ENCODE measurements at regions of chr1 and their contacts with region 1.

Region 1: DNA sequence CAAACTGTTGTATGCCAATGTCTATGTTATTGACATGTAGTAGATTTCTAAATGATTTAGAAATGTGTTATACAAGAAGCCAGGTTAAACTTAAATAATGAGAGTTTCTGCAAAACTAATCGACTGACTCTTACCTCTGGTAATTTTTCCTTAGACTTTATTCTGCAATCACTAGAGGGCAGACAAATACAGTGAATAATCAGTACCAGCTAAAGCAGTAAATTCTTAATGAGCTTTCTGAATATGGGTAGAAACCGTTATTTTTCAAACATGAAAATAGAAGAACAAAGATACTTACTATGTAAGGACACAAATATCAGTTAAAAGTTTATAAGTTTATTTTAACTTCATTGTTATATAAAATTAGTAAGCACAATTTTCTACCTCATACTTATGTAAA is 97.9 kb upstream of the RGS1 start:
- DNase-seq: peak; percentile 31
- CTCF ChIP-seq: peak; percentile 61

Region 2: GRCh38 chr1:192445848-192446489 is 31.7 kb before region 1 on chr1:
- CTCF ChIA-PET with region 1: no interaction called
- POLR2A ChIA-PET with region 1: no interaction called
- DNase-seq: no peak
- CTCF ChIP-seq: peak; percentile 71

Region 3: GRCh38 chr1:192489748-192490147 is 12.1 kb after region 1 on chr1:
- CTCF ChIA-PET with region 1: interaction called, 11 read pairs
- POLR2A ChIA-PET with region 1: no interaction called
- DNase-seq: no peak
- CTCF ChIP-seq: no peak

Region 4: GRCh38 chr1:192588546-192588945 is 110.9 kb after region 1 on chr1:
- CTCF ChIA-PET with region 1: interaction called, 13 read pairs
- POLR2A ChIA-PET with region 1: no interaction called
- DNase-seq: no peak
- CTCF ChIP-seq: no peak

Region 5: DNA sequence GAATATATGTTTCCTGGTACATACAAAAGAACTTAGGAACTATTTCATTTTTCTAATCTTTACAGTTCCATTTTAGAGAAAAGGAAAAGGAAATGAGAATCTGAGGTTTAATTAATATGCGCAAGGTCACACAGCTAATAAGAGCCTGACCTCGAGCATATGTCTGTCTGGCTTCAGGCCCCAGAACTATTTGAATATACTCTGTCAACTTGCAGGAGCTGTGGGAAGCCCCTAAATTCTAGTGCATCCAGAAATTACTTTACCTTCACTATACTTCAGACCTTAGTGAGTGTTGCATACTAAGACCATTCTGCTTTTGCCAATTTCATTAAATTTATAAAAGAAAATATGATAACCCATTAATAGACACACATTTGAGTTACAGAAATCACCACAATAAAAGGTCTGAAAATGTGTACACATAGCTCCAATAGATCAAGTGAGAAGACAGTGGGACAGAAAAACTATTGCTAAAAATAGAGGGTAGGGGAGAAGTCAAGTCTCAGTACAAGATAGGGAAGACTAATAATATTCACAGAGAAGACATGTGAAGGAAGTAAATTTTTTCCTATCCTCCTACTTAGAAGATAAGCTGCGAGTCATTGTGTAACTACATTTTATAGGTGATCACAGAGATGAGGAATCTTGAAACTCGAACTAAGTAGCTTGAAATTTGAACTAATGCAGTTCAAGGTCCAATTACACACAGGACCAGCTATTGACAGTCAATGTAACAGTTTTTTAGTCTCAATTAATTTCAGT is 162.2 kb after region 1 on chr1:
- CTCF ChIA-PET with region 1: interaction called, 11 read pairs
- POLR2A ChIA-PET with region 1: no interaction called
- DNase-seq: peak; percentile 12
- CTCF ChIP-seq: no peak

Measured in GM10248 (cell line).